IMR-90 (cell line): ENCODE measurements at regions of chr15 and their contacts with region 1.

Region 1: GRCh38 chr15:57306161-57306943 is 70.0 kb upstream of the CGNL1 start:
- DNase-seq: peak; percentile 28
- ATAC-seq: peak; percentile 92
- H3K4me3 ChIP-seq: peak overlapping the region; percentile 23; the same call in 1 of the 2 replicates
- H3K27ac ChIP-seq: peak overlapping the region; percentile 19
- H3K4me1 ChIP-seq: peaks cover 16% of the 10 kb centered on the region; the same call in 1 of the 2 replicates
- H3K27me3 ChIP-seq: no peaks in the 10 kb centered on the region
- CTCF ChIP-seq: peak; percentile 79
- POLR2A ChIP-seq: no peak
- RAD21 ChIP-seq: peak; percentile 76

Region 2: GRCh38 chr15:56821721-56822425 is 484.5 kb before region 1 on chr15:
- CTCF ChIA-PET with region 1: interaction called, 4 read pairs
- POLR2A ChIA-PET with region 1: no interaction called
- dilution Hi-C with region 1: no loop called
- in situ Hi-C with region 1: no loop called
- intact Hi-C with region 1: loop called (anchors 2 kb)
- DNase-seq: peak; percentile 77
- ATAC-seq: peak; percentile 95
- H3K4me3 ChIP-seq: no peak overlapping the region
- H3K27ac ChIP-seq: no peak overlapping the region
- H3K4me1 ChIP-seq: peaks cover 6% of the 10 kb centered on the region
- H3K27me3 ChIP-seq: no peaks in the 10 kb centered on the region
- CTCF ChIP-seq: peak; percentile 79
- POLR2A ChIP-seq: no peak
- RAD21 ChIP-seq: peak; percentile 85

Region 3: GRCh38 chr15:57146506-57147201 is 159.7 kb before region 1 on chr15:
- CTCF ChIA-PET with region 1: interaction called, 5 read pairs
- POLR2A ChIA-PET with region 1: no interaction called
- dilution Hi-C with region 1: no loop called
- in situ Hi-C with region 1: loop called (anchors 10 kb)
- intact Hi-C with region 1: loop called (anchors 1 kb)
- DNase-seq: peak; percentile 73
- ATAC-seq: peak; percentile 52
- H3K4me3 ChIP-seq: peak overlapping the region; percentile 20; the same call in 1 of the 2 replicates
- H3K27ac ChIP-seq: no peak overlapping the region; the same call in 1 of the 2 replicates
- H3K4me1 ChIP-seq: peaks cover 25% of the 10 kb centered on the region
- H3K27me3 ChIP-seq: no peaks in the 10 kb centered on the region
- CTCF ChIP-seq: peak; percentile 88
- POLR2A ChIP-seq: no peak
- RAD21 ChIP-seq: peak; percentile 83

Region 4: DNA sequence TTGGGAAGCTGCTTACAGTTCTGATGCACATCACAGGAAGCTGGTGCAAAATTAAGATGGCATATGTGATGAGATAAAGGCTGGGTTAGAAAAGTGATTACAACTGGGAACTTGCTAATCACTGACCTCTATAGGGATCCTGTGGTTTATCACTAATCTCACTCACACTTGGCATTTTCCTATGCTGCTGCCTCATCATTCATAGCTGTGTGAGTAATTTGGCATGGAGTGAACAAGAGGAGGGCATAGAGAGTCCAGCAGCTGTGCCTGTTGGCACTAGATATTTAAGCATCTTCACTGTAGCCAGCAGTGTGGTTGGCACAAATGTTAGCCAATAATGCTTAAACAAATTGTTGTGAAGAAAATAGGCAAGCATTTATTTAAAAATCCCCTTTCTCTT is 147.8 kb before region 1 on chr15:
- CTCF ChIA-PET with region 1: no interaction called
- POLR2A ChIA-PET with region 1: no interaction called
- dilution Hi-C with region 1: no loop called
- in situ Hi-C with region 1: loop called (anchors 10 kb)
- intact Hi-C with region 1: no loop called
- DNase-seq: peak; percentile 48
- ATAC-seq: no peak
- H3K4me3 ChIP-seq: no peak overlapping the region
- H3K27ac ChIP-seq: peak overlapping the region; percentile 69; the same call in 1 of the 2 replicates
- H3K4me1 ChIP-seq: peaks cover 23% of the 10 kb centered on the region
- H3K27me3 ChIP-seq: no peaks in the 10 kb centered on the region
- CTCF ChIP-seq: no peak
- POLR2A ChIP-seq: no peak
- RAD21 ChIP-seq: no peak

Region 5: DNA sequence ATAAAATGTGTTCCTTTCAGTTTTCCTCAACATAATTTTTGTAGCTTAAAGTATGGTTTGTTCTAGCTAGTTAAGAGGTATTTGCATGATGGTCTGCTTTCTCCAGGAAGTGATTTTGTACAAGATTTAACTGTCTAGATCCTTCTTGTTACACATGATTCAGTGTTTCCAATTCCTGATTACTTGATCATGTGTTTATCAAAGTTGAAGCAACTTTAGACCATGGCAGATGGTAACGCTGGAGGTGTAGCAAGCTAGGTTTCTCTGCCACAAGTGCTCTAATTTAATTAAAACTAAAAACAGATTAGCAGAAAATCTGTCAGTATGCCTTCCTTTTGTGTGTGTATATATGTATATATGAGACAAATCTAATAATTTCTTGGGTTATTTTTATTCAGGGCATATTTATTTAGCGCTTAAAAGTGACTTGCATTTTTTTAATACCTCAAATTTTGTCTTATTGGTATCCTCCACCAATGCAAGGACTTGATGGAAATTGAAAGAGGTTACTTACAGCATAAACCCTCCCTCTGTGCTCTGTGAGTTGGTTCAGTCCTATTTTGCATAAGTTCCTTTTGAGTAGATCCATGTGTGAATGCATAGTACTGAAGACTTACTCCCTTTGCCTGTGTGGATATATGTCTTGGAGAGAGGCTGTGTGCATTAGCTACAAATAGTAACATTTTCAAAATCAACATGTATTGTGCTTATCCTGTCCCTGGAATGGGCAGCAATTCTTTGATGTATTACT is 87.4 kb before region 1 on chr15:
- CTCF ChIA-PET with region 1: interaction called, 3 read pairs
- POLR2A ChIA-PET with region 1: no interaction called
- dilution Hi-C with region 1: no loop called
- in situ Hi-C with region 1: no loop called
- intact Hi-C with region 1: loop called (anchors 1 kb)
- DNase-seq: peak; percentile 96
- ATAC-seq: peak; percentile 65
- H3K4me3 ChIP-seq: peak overlapping the region; percentile 79
- H3K27ac ChIP-seq: peak overlapping the region; percentile 74; the same call in 1 of the 2 replicates
- H3K4me1 ChIP-seq: peaks cover 10% of the 10 kb centered on the region
- H3K27me3 ChIP-seq: no peaks in the 10 kb centered on the region
- CTCF ChIP-seq: no peak
- POLR2A ChIP-seq: no peak
- RAD21 ChIP-seq: no peak